ENCODE measurements at regions of chr17 and their contacts with region 1.

Region 1: GRCh38 chr17:40598663-40599467 is 33.6 kb upstream of the CCR7 start:
- DNase-seq: peak; percentile 56
- H3K4me3 Mint-ChIP-seq: peak overlapping the region; percentile 46
- H3K27ac Mint-ChIP-seq: peak overlapping the region; percentile 89
- H3K4me1 Mint-ChIP-seq: peaks cover 87% of the 10 kb centered on the region
- H3K27me3 Mint-ChIP-seq: no peaks in the 10 kb centered on the region

Region 2: GRCh38 chr17:40542558-40543411 is 56.1 kb before region 1 on chr17:
- intact Hi-C with region 1: loop called (anchors 2 kb)
- DNase-seq: no peak
- H3K4me3 Mint-ChIP-seq: peak overlapping the region; percentile 69
- H3K27ac Mint-ChIP-seq: peak overlapping the region; percentile 88
- H3K4me1 Mint-ChIP-seq: peaks cover 75% of the 10 kb centered on the region
- H3K27me3 Mint-ChIP-seq: peaks cover 10% of the 10 kb centered on the region

Region 3: DNA sequence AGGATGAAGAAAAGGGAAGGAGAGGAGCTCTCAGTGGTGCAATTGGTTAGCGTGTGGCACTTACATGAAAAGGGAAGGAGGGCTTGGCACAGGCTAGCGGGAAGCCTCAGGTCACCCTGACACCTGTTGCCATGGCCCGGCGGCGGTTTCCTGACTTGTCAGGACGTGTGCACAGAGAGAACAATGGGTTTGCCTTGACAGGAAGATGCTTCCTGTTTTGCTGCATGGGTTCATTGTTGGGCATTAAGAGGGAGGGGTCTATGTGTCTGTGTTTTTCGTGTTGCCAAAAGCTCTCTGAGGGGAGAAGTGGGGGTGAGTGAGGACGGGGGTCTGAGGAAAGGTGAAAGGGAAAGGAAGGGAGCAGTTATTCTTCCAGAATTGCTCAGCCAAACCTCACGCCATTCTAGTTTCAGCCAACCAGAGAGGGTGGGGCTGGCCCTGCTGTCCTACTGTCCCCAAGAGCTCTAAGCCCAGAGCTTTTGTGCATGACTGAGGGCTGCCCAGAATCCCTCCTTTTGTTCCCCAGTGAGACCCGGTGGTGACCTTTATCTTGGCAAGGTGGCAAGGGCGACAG is 16.4 kb before region 1 on chr17:
- intact Hi-C with region 1: loop called (anchors 1 kb)
- DNase-seq: peak; percentile 58
- H3K4me3 Mint-ChIP-seq: peak overlapping the region; percentile 8
- H3K27ac Mint-ChIP-seq: peak overlapping the region; percentile 79
- H3K4me1 Mint-ChIP-seq: peaks cover 81% of the 10 kb centered on the region
- H3K27me3 Mint-ChIP-seq: no peaks in the 10 kb centered on the region

Region 4: DNA sequence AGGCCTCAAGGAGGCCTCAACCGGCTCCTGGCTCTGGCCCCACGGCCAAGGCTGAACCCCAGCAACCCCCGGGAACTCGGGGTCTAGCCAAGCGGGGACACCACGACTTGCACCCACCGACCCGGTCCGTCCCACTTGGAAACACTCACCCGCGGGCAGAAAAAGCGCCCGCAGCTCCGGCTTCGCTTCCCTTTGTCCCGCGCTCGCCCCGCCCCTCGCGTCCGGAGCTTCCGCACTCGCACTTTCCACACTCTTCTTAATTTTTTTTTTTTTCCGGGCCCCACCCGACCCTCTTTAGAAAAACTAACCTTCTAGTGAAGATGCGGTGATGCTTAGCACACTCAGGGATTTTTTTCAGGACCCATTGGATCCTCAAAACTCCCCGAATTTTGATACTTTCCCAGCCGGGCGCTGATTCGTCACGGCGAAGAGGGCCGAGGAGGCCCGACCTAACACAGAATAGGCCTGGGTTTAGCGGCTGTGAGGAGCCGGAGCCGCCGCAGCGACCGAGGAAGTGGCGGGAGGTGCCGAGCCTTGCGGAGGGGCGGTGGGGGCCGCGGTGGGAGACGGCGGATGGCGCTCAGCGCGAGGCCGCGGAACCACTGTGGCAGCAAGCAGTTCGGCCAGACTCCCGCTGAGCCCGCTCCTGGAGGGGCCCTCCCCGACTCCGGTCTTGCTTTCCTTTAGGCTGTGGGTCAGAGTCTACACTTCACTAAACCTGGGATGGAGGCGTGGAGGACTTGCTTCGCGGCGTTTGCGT is 48.9 kb after region 1 on chr17 and contains the start of gene SMARCE1:
- intact Hi-C with region 1: no loop called
- DNase-seq: peak; percentile 62
- H3K4me3 Mint-ChIP-seq: peak within 1 kb of the TSS; percentile 89
- H3K27ac Mint-ChIP-seq: peak within 1 kb of the TSS; percentile 95
- H3K4me1 Mint-ChIP-seq: peaks cover 55% of the 10 kb centered on the region
- H3K27me3 Mint-ChIP-seq: peaks cover 2% of the 10 kb centered on the region
- total RNA-seq, gene SMARCE1: 125 and 132 TPM in 2 replicates